ENCODE measurements at regions of chr1 and their contacts with region 1.

Region 1: DNA sequence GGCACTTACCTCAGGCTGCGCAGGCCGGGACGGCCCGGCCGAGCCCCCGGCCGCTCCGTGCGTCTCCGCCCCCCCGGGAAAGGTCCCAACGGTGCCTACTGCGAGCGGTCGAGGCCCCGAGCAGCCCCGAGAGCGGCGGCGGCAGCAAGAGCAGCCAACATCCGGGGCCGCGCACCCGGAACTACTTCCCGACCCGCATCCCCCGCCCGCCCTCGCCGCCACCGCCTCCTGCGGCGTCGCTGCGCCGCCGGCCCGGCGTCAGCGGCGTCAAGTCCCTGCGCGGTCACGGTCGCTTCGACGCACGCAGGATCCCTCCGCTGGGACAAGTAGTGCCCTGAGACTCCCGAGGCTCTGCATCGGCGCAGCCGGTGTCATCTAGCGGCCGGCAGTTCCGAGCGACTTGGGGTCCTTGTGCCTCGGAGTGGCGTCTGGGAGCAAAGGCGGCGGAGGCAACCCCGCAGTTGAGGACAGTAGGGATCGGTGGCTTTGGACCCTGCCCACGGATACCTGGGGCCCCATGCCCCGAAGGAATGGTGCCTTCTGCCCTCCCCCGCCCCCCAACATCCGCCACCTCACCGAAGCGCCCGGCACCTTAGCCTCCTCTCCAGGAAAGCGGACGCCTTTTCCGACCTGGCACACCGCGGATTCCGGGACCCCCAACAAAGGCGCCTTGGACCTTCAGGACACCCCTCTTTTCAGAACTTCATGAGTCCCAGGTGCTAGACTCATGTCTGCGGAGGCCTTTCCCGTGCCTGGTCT is at the start of gene FOXJ3:
- DNase-seq: peak; percentile 92
- H3K4me3 Mint-ChIP-seq: peak within 1 kb of the TSS; percentile 79
- H3K27ac Mint-ChIP-seq: peak within 1 kb of the TSS; percentile 92
- H3K4me1 Mint-ChIP-seq: peaks cover 46% of the 10 kb centered on the region
- H3K27me3 Mint-ChIP-seq: no peaks in the 10 kb centered on the region
- CTCF ChIP-seq: no peak
- total RNA-seq, gene FOXJ3: 42.2 and 43.7 TPM in 2 replicates

Region 2: GRCh38 chr1:42173155-42173933 is 161.9 kb before region 1 on chr1:
- CTCF ChIA-PET with region 1: interaction called, 39 read pairs
- POLR2A ChIA-PET with region 1: interaction called, 23 read pairs
- intact Hi-C with region 1: loop called (anchors 1 kb)
- DNase-seq: peak; percentile 58
- H3K4me3 Mint-ChIP-seq: no peak overlapping the region
- H3K27ac Mint-ChIP-seq: no peak overlapping the region
- H3K4me1 Mint-ChIP-seq: peaks cover 23% of the 10 kb centered on the region
- H3K27me3 Mint-ChIP-seq: no peaks in the 10 kb centered on the region
- CTCF ChIP-seq: peak; percentile 91

Region 3: DNA sequence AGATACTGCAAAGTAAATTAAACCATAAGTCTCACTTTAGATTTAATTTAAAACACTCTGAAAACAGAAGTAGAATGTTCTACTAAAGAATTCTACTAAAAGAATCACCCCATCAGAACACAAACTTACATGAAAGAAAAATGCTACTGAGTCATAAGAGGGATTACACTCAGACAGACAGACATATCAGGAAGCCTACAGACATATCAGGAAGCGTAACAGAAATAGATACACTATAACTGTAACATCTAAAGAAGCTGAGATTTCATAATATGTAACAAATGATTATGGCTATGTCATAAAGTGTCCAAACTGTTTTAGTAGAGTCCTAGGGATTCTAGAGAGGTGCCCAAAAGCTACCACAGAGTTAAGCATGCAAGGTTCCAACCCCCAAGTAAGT is 24.1 kb before region 1 on chr1:
- CTCF ChIA-PET with region 1: no interaction called
- POLR2A ChIA-PET with region 1: interaction called, 14 read pairs
- intact Hi-C with region 1: no loop called
- DNase-seq: peak; percentile 11
- H3K4me3 Mint-ChIP-seq: no peak overlapping the region
- H3K27ac Mint-ChIP-seq: peak overlapping the region; percentile 53
- H3K4me1 Mint-ChIP-seq: peaks cover 52% of the 10 kb centered on the region
- H3K27me3 Mint-ChIP-seq: no peaks in the 10 kb centered on the region
- CTCF ChIP-seq: no peak

Region 4: DNA sequence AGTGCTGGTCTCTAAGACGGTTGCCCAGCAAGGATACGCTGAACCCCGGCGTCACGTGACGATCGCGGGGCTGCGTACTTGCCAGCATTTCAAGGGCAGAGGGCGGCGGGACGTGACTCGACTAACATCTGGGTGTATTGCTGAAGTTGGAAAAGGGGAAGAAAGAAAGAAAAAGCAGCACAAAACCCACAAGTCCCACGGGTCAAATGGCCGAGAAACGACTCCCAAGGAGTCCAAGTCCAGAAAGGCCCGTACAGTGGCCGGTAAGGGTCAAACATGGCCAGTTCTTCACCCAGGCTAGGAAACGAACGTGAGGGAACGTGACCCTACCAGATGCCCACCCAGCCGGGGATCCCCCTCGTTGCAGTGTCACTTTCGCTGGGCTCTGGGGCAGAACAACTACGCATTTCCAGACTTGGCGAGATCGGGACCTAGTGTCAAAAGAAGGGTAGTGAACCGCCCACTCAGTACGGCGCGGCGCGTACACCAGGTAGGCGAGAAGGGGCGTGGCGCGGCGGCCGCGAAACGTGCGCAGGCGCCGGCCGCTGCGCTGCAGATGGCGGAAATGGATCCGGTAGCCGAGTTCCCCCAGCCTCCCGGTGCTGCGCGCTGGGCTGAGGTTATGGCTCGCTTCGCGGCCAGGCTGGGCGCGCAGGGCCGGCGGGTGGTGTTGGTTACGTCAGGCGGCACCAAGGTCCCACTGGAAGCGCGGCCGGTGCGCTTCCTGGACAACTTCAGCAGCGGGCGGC is 121.0 kb after region 1 on chr1 and contains the starts of genes PPCS and ZMYND12:
- CTCF ChIA-PET with region 1: no interaction called
- POLR2A ChIA-PET with region 1: interaction called, 10 read pairs
- intact Hi-C with region 1: no loop called
- DNase-seq: peak; percentile 84
- H3K4me3 Mint-ChIP-seq: peak within 1 kb of the TSS; percentile 80
- H3K27ac Mint-ChIP-seq: peak within 1 kb of the TSS; percentile 74
- H3K4me1 Mint-ChIP-seq: no peaks in the 10 kb centered on the region
- H3K27me3 Mint-ChIP-seq: no peaks in the 10 kb centered on the region
- CTCF ChIP-seq: no peak
- total RNA-seq, gene PPCS: 56.1 and 56.9 TPM in 2 replicates
- total RNA-seq, gene ZMYND12: 0.21 TPM in 1 of 2 replicates, not detected in the other

Region 5: GRCh38 chr1:42681741-42682483 is 346.7 kb after region 1 on chr1 and contains the start of gene YBX1:
- CTCF ChIA-PET with region 1: no interaction called
- POLR2A ChIA-PET with region 1: interaction called, 11 read pairs
- intact Hi-C with region 1: no loop called
- DNase-seq: peak; percentile 99
- H3K4me3 Mint-ChIP-seq: peak within 1 kb of the TSS; percentile 89
- H3K27ac Mint-ChIP-seq: peak within 1 kb of the TSS; percentile 98
- H3K4me1 Mint-ChIP-seq: peaks cover 36% of the 10 kb centered on the region
- H3K27me3 Mint-ChIP-seq: no peaks in the 10 kb centered on the region
- CTCF ChIP-seq: no peak
- total RNA-seq, gene YBX1: 1,134 and 1,200 TPM in 2 replicates

Region 6: GRCh38 chr1:42756956-42757891 is 422.0 kb after region 1 on chr1:
- CTCF ChIA-PET with region 1: interaction called, 4 read pairs
- POLR2A ChIA-PET with region 1: no interaction called
- intact Hi-C with region 1: loop called (anchors 10 kb)
- DNase-seq: peak; percentile 70
- H3K4me3 Mint-ChIP-seq: no peak overlapping the region
- H3K27ac Mint-ChIP-seq: no peak overlapping the region
- H3K4me1 Mint-ChIP-seq: peaks cover 14% of the 10 kb centered on the region
- H3K27me3 Mint-ChIP-seq: no peaks in the 10 kb centered on the region
- CTCF ChIP-seq: peak; percentile 61

Measured in MCF 10A (cell line).